ENCODE measurements at regions of chr12 and their contacts with region 1.

Region 1: GRCh38 chr12:117658226-117658625 is 296.8 kb upstream of the NOS1 start:
- DNase-seq: no peak
- H3K4me3 ChIP-seq: no peak overlapping the region
- H3K27ac ChIP-seq: no peak overlapping the region
- H3K4me1 ChIP-seq: no peaks in the 10 kb centered on the region
- H3K27me3 ChIP-seq: no peaks in the 10 kb centered on the region
- CTCF ChIP-seq: no peak
- POLR2A ChIP-seq: no peak

Region 2: DNA sequence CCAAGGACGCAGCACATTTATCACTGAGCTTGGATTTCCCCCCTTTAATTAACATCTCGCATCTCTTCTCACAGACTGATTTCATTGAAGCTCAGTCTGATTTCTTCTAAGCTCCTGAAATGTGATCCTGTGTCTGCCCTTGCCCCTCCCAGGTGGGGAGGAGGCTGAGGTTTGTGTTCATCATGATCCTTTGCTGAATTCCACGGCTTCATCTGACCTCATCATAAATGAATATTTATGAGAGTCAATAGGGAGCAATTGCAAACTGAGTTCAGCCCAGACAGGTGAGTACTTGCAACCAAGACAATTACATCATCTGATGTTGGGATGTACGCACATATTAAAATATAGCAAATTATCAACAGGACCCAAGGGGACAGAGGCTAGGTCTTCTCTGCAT is 1026.6 kb before region 1 on chr12:
- intact Hi-C with region 1: no loop called
- DNase-seq: no peak
- H3K4me3 ChIP-seq: no peak overlapping the region
- H3K27ac ChIP-seq: no peak overlapping the region
- H3K4me1 ChIP-seq: no peaks in the 10 kb centered on the region
- H3K27me3 ChIP-seq: no peaks in the 10 kb centered on the region
- CTCF ChIP-seq: no peak
- POLR2A ChIP-seq: no peak

Region 3: DNA sequence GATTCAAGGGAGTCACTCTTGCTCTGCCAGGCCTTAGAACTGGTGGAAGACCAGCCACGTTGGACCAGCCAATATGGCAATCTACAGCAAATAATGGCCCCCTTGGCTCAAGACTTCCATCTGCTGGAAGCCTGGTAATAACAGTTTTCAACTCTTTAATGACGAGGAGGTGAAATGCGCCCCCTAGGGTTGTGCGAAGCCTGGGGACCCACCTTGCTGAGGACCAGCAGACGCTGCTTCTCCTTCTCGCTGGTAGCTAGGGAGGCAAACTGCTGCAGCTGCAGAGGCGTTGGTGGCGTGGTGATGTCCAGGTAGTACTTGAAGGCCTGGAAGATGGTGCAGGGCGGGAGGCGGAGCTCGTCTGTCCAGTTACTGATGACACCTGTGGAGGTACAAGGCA is 426.5 kb before region 1 on chr12:
- intact Hi-C with region 1: loop called (anchors 5 kb)
- DNase-seq: no peak
- H3K4me3 ChIP-seq: no peak overlapping the region
- H3K27ac ChIP-seq: no peak overlapping the region
- H3K4me1 ChIP-seq: no peaks in the 10 kb centered on the region
- H3K27me3 ChIP-seq: peaks cover 0 to 18% of the 10 kb centered on the region in 2 donors
- CTCF ChIP-seq: no peak
- POLR2A ChIP-seq: no peak